CD8-positive, alpha-beta T cell (primary cell): ENCODE measurements at regions of chr5 and their contacts with region 1.

Region 1: DNA sequence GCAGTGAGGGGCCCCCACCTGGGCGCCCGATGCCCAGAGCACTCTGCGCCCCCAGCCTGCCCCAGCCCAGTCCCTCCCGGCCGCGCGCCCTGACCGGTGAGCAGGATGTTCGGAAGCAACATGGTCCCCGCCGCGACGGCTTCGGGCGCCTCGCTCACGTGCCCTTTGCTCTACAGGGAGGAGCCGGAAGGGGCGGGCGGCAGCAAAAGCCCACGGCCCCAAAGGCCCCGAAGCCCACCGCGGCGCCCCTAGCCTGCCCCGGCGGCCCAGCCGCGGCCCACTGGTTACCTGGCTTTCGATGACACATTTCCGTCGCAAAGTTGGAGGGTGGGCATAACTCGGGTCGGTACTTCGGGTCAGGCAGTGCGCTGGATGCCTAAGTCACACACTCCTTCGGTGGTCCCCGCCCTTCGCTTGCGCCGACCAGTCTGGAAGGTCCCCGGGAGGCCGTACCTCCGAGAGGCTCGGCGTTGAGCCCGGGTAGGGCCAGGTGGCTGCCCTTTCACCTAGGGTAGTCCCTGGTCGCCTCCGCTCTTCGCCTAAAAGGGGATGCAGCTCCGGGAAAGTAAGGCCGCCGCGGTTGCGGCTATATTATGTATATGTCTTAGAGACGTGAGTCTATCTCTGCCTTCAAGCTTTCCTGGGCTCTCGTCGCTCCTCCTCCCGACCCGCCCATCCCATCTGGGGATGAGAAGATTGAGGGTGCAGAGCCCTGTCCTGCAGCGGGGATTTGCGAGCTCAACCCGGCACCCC is at the starts of genes AK6, RAD17 and TAF9:
- DNase-seq: peak; percentile 82 to 96 (median 92)
- ATAC-seq: peak; percentile 90
- H3K4me3 ChIP-seq: peak within 1 kb of the TSS; percentile 77 to 95
- H3K4me3 Mint-ChIP-seq: peak within 1 kb of the TSS; percentile 93
- H3K27ac ChIP-seq: peak within 1 kb of the TSS; percentile 95 to 99
- H3K27ac Mint-ChIP-seq: peak within 1 kb of the TSS; percentile 99
- H3K4me1 ChIP-seq: peaks cover 21% of the 10 kb centered on the region
- H3K4me1 Mint-ChIP-seq: peaks cover 52% of the 10 kb centered on the region
- H3K27me3 ChIP-seq: no peaks in the 10 kb centered on the region
- H3K27me3 Mint-ChIP-seq: no peaks in the 10 kb centered on the region
- CTCF ChIP-seq: no peak
- total RNA-seq, gene AK6: 10.2 to 12.1 TPM
- total RNA-seq, gene RAD17: 19.5 to 22.2 TPM
- total RNA-seq, gene TAF9: 51.3 to 56.6 TPM

Region 2: DNA sequence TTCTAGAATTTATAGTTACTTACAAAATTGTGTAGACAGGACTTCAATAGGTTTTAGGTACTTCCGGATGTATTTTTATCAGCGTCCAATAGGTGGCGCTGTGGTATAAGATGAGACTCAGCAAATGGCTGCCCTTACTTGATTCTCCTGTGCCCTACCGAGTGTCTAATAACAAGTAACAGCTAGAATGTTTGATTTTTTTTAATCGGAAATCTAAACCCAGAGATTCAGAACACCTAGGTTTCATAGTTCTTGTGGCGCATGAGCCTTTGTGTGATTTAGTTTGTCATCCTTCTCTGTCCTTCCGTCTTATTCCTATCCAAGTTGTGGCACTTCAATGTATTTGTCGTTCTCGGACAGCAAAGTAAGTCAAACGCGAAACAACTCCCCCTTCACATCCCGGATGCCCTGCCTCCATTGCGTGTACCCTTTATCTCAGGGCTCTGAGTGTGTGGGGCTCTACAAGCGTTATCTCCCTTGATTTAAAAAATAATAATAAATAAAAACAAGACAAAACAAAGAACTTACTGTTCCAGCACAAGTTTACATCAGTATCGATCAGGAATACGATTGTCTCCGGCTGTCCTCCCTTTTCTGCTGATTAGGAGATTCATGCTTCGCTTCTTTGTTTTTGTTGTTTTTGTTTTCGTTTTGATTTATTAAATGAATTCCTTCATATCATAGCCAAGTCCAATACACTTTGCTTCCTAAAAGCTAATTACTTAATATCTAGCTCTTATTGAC is 326.5 kb before region 1 on chr5:
- CTCF ChIA-PET with region 1: no interaction called
- POLR2A ChIA-PET with region 1: no interaction called
- intact Hi-C with region 1: loop called (anchors 1 to 5 kb)
- DNase-seq: peak; percentile 50 to 95 (median 78)
- ATAC-seq: peak; percentile 97
- H3K4me3 ChIP-seq: peak overlapping the region; percentile 54 to 64
- H3K4me3 Mint-ChIP-seq: peak overlapping the region; percentile 89
- H3K27ac ChIP-seq: peak overlapping the region; percentile 69 to 81
- H3K27ac Mint-ChIP-seq: peak overlapping the region; percentile 95
- H3K4me1 ChIP-seq: peaks cover 3% of the 10 kb centered on the region
- H3K4me1 Mint-ChIP-seq: peaks cover 11% of the 10 kb centered on the region
- H3K27me3 ChIP-seq: no peaks in the 10 kb centered on the region
- H3K27me3 Mint-ChIP-seq: no peaks in the 10 kb centered on the region
- CTCF ChIP-seq: peak; percentile 88

Region 3: DNA sequence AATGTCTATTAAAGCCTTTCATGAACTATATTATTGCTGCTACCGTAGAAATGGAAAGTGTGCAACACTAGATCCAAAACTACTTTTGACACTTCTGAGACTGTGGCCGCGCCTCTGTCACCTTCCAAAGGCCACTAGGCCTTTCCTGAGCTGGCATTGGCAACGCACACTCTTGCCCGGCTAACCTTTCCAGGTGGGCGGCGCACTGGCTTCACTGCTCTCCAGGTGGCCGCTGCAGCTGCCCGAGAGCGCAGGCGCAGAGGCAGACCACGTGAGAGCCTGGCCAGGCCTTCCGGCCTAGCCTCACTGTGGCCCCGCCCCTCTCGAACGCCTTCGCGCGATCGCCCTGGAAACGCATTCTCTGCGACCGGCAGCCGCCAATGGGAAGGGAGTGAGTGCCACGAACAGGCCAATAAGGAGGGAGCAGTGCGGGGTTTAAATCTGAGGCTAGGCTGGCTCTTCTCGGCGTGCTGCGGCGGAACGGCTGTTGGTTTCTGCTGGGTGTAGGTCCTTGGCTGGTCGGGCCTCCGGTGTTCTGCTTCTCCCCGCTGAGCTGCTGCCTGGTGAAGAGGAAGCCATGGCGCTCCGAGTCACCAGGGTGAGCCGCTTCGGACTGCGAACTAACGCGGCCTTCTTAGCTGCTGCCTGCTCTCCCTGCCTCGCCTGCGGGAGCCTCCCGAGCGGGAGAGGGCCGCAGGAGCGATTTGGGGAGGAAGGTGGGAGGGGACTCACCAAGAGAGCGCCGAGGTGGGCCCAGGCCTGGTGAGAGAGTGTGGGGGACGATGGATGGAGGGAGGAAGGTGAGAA is 202.7 kb before region 1 on chr5 and contains the start of gene CCNB1:
- CTCF ChIA-PET with region 1: no interaction called
- POLR2A ChIA-PET with region 1: no interaction called
- intact Hi-C with region 1: loop called (anchors 1 kb)
- DNase-seq: peak; percentile 93 to 98 (median 96)
- ATAC-seq: peak; percentile 100
- H3K4me3 ChIP-seq: peak within 1 kb of the TSS; percentile 84 to 87
- H3K4me3 Mint-ChIP-seq: peak within 1 kb of the TSS; percentile 94
- H3K27ac ChIP-seq: peak within 1 kb of the TSS; percentile 50 to 61
- H3K27ac Mint-ChIP-seq: peak within 1 kb of the TSS; percentile 84
- H3K4me1 ChIP-seq: peaks cover 9% of the 10 kb centered on the region
- H3K4me1 Mint-ChIP-seq: peaks cover 27% of the 10 kb centered on the region
- H3K27me3 ChIP-seq: no peaks in the 10 kb centered on the region
- H3K27me3 Mint-ChIP-seq: no peaks in the 10 kb centered on the region
- CTCF ChIP-seq: no peak
- total RNA-seq, gene CCNB1: 0.75 to 0.95 TPM

Region 4: GRCh38 chr5:69189162-69190086 is 180.1 kb before region 1 on chr5 and contains the start of gene CENPH:
- CTCF ChIA-PET with region 1: no interaction called
- POLR2A ChIA-PET with region 1: no interaction called
- intact Hi-C with region 1: loop called (anchors 1 to 2 kb)
- DNase-seq: peak; percentile 82 to 93 (median 90)
- ATAC-seq: peak; percentile 94
- H3K4me3 ChIP-seq: peak within 1 kb of the TSS; percentile 75 to 77
- H3K4me3 Mint-ChIP-seq: peak within 1 kb of the TSS; percentile 91
- H3K27ac ChIP-seq: peak within 1 kb of the TSS; percentile 66 to 73
- H3K27ac Mint-ChIP-seq: peak within 1 kb of the TSS; percentile 84
- H3K4me1 ChIP-seq: peaks cover 10% of the 10 kb centered on the region
- H3K4me1 Mint-ChIP-seq: peaks cover 16% of the 10 kb centered on the region
- H3K27me3 ChIP-seq: no peaks in the 10 kb centered on the region
- H3K27me3 Mint-ChIP-seq: no peaks in the 10 kb centered on the region
- CTCF ChIP-seq: no peak
- total RNA-seq, gene CENPH: 4.1 to 4.6 TPM

Region 5: DNA sequence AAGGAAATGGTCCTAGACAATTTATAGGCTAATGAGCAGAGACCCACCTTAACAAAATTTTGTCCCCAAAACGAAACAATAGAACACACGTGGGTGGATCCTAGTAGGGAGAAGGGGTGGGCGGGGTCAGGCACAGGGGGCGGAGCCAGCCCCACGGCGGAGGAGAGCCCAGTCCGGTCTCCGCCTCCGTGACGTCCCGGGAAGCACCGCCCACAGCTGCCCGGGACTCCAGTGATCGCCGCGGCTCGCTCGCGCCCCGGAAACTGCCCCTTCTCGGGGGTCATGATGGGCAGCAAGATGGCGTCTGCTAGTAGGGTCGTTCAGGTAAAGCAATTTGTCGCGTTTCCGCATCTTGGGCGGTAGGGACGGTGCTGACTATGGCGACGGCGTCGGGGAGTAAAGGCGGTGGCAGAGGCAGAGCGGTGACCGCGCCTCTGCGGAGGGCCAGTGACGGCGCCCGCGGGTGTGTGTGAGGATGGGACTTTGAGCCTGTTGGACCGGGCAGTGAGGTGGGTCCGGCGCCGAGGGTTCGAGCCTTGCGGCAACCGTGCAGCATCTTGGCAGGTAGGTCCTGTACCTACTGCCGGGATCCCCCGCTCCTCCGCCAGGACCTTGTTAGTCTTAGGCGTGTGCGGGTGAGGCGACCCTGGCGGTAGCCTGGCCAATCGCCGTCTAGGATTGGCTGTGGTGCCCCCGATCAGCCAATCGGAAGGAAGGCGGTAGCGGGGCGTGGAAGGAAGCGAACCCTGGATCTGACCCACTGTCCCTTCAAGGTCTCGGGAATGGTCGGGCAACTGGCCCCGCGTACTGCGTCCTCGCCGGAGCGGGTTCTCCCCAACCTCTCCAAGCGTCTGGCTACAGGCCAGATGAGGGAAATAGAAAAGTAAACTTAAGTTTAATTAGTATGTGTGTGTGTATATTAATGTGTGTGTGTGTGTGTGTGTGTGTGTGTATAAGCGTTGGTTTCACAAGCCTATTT is 151.7 kb before region 1 on chr5:
- CTCF ChIA-PET with region 1: no interaction called
- POLR2A ChIA-PET with region 1: no interaction called
- intact Hi-C with region 1: loop called (anchors 2 to 5 kb)
- DNase-seq: peak; percentile 90 to 97 (median 94)
- ATAC-seq: peak; percentile 92
- H3K4me3 ChIP-seq: peak overlapping the region; percentile 85 to 97
- H3K4me3 Mint-ChIP-seq: peak overlapping the region; percentile 100
- H3K27ac ChIP-seq: peak overlapping the region; percentile 91 to 95
- H3K27ac Mint-ChIP-seq: peak overlapping the region; percentile 99
- H3K4me1 ChIP-seq: peaks cover 15% of the 10 kb centered on the region
- H3K4me1 Mint-ChIP-seq: peaks cover 28% of the 10 kb centered on the region
- H3K27me3 ChIP-seq: no peaks in the 10 kb centered on the region
- H3K27me3 Mint-ChIP-seq: no peaks in the 10 kb centered on the region
- CTCF ChIP-seq: no peak

Region 6: DNA sequence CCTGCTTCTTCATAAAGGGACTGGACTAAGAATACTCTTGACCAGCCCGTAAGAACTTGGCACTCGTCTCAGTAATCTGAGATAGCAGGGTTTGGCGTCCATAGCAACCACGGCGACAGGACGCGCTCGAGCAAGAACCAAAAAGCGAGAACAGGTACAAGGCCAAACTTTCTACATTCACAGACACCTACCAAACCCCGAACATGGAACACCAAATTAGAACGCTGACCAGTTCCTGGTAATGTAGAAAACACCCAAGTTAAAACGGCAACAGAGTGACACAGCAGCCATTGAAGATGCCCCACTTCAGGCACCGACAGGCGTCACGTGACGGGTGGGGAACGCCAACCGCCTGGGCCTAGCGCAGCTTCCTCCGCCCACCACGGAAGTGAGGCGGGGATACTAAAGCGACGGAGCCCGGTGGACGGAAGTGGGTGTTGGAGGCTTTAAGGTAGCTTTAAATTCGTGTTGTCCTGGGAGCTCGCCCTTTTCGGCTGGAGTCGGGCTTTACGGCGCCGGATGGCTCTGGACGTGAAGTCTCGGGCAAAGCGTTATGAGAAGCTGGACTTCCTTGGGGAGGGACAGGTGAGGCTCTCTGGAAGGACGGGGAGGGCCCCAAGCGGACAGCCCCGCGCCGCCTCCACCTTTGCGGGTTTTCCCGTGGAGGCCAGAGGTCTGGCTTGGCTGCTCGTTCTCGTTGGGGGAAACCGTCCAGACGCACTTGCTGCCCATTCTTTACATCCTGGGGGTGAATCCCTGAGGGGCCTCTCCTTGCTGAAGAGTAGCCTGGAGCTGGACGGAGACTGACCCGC is 134.9 kb before region 1 on chr5 and contains the start of gene CDK7:
- CTCF ChIA-PET with region 1: no interaction called
- POLR2A ChIA-PET with region 1: interaction called, 3 read pairs
- intact Hi-C with region 1: loop called (anchors 1 to 2 kb)
- DNase-seq: peak; percentile 83 to 96 (median 92)
- ATAC-seq: peak; percentile 99
- H3K4me3 ChIP-seq: peak within 1 kb of the TSS; percentile 71 to 98
- H3K4me3 Mint-ChIP-seq: peak within 1 kb of the TSS; percentile 94
- H3K27ac ChIP-seq: peak within 1 kb of the TSS; percentile 67 to 85
- H3K27ac Mint-ChIP-seq: peak within 1 kb of the TSS; percentile 89
- H3K4me1 ChIP-seq: peaks cover 20% of the 10 kb centered on the region
- H3K4me1 Mint-ChIP-seq: peaks cover 39% of the 10 kb centered on the region
- H3K27me3 ChIP-seq: no peaks in the 10 kb centered on the region
- H3K27me3 Mint-ChIP-seq: no peaks in the 10 kb centered on the region
- CTCF ChIP-seq: no peak
- total RNA-seq, gene CDK7: 27.5 to 29.4 TPM

Region 7: GRCh38 chr5:69271376-69271775 is 98.2 kb before region 1 on chr5:
- CTCF ChIA-PET with region 1: no interaction called
- POLR2A ChIA-PET with region 1: no interaction called
- intact Hi-C with region 1: loop called in 1 of 2 experiments (anchors 10 kb)
- DNase-seq: peak in 1 of 9 experiments; percentile 7
- ATAC-seq: no peak
- H3K4me3 ChIP-seq: no peak overlapping the region
- H3K4me3 Mint-ChIP-seq: no peak overlapping the region
- H3K27ac ChIP-seq: no peak overlapping the region
- H3K27ac Mint-ChIP-seq: no peak overlapping the region
- H3K4me1 ChIP-seq: no peaks in the 10 kb centered on the region
- H3K4me1 Mint-ChIP-seq: peaks cover 10% of the 10 kb centered on the region
- H3K27me3 ChIP-seq: no peaks in the 10 kb centered on the region
- H3K27me3 Mint-ChIP-seq: no peaks in the 10 kb centered on the region
- CTCF ChIP-seq: no peak

Region 8: DNA sequence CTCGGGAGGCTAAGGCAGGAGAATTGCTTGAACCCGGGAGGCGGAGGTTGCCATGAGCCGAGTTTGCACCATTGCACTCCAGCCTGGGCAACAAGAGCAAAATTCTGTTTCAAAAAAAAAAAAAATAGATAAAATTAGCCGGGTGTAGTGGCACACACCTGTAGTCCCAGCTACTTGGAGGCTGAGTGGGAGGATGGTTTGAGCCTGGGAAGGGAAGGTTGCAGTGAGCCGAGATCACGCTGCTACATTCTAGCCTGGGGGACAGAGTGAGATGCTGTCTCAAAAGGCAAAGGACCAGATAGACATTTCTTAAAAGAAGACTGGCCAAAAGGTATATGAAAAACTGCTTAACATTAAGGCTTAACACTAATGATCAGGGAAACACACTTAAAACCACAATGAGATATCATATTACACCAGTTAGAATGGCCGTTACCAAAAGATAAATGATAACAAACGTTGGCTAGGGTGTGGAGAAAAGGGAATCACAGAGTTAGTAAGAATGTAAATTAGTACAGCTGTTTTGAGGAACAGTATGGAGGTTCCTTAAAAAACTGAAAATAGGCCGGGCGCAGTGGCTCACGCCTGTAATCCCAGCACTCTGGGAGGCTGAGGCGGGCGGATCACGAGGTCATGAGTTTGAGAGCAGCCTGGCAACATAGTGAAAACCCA is 35.2 kb after region 1 on chr5:
- CTCF ChIA-PET with region 1: no interaction called
- POLR2A ChIA-PET with region 1: no interaction called
- intact Hi-C with region 1: no loop called
- DNase-seq: no peak
- ATAC-seq: no peak
- H3K4me3 ChIP-seq: no peak overlapping the region
- H3K4me3 Mint-ChIP-seq: no peak overlapping the region
- H3K27ac ChIP-seq: no peak overlapping the region
- H3K27ac Mint-ChIP-seq: no peak overlapping the region
- H3K4me1 ChIP-seq: no peaks in the 10 kb centered on the region
- H3K4me1 Mint-ChIP-seq: no peaks in the 10 kb centered on the region
- H3K27me3 ChIP-seq: no peaks in the 10 kb centered on the region
- H3K27me3 Mint-ChIP-seq: no peaks in the 10 kb centered on the region
- CTCF ChIP-seq: no peak